Activated CD8-positive, alpha-beta T cell treated with anti-CD3 and anti-CD28 coated beads for 36 hours (primary cell): ENCODE measurements at regions of chr5 and their contacts with region 1.

Region 1: DNA sequence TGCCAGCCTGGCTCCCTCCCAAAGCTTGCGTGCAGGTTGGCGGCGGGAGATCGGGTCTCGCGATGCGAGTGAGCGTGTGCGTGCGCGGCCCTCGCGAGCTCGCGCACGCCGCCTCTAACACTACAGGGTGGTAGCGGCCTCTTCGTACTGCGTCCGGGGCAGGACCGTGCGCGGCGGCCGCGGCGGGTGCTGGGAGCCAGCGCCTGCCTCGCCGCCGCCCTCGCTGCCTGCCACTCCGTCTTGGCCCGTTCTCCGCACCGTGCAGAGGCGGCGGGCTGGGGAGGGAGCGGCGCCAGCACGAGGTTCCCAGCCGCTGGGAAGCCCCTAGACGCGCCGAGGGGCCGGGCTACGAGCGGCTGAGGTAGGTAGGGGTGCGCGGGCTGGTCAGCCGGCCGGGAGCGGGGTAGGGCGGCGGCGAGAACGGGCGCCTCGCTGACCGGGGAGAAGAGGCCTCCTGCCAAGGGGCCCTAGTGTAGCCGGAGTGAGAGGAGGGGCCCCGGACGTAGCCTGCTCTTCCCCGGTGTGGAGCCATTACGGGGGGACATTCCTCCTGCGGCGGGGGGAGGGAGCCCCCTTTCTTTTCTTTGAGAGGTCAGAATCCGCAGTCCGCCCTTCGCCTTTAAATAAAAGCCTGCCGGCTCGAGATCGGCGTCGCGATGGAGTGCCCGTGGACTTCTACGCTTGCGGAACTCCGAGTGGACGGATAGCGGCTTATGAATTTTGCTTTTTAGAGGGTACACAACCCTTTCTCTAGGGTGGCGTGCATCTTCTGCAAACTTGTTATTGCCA is at the start of gene C5orf24:
- DNase-seq: peak; percentile 94
- ATAC-seq: peak; percentile 95
- H3K4me3 Mint-ChIP-seq: peak within 1 kb of the TSS; percentile 91
- H3K27ac Mint-ChIP-seq: peak within 1 kb of the TSS; percentile 98
- H3K4me1 Mint-ChIP-seq: peaks cover 33% of the 10 kb centered on the region
- H3K27me3 Mint-ChIP-seq: no peaks in the 10 kb centered on the region
- CTCF ChIP-seq: no peak
- total RNA-seq, gene C5orf24: 24.4 to 25.3 TPM

Region 2: GRCh38 chr5:134833340-134834032 is 12.6 kb before region 1 on chr5:
- CTCF ChIA-PET with region 1: interaction called, 4 read pairs
- POLR2A ChIA-PET with region 1: interaction called, 13 read pairs
- intact Hi-C with region 1: no loop called
- DNase-seq: no peak
- ATAC-seq: no peak
- H3K4me3 Mint-ChIP-seq: no peak overlapping the region
- H3K27ac Mint-ChIP-seq: no peak overlapping the region
- H3K4me1 Mint-ChIP-seq: no peaks in the 10 kb centered on the region
- H3K27me3 Mint-ChIP-seq: no peaks in the 10 kb centered on the region
- CTCF ChIP-seq: no peak

Region 3: DNA sequence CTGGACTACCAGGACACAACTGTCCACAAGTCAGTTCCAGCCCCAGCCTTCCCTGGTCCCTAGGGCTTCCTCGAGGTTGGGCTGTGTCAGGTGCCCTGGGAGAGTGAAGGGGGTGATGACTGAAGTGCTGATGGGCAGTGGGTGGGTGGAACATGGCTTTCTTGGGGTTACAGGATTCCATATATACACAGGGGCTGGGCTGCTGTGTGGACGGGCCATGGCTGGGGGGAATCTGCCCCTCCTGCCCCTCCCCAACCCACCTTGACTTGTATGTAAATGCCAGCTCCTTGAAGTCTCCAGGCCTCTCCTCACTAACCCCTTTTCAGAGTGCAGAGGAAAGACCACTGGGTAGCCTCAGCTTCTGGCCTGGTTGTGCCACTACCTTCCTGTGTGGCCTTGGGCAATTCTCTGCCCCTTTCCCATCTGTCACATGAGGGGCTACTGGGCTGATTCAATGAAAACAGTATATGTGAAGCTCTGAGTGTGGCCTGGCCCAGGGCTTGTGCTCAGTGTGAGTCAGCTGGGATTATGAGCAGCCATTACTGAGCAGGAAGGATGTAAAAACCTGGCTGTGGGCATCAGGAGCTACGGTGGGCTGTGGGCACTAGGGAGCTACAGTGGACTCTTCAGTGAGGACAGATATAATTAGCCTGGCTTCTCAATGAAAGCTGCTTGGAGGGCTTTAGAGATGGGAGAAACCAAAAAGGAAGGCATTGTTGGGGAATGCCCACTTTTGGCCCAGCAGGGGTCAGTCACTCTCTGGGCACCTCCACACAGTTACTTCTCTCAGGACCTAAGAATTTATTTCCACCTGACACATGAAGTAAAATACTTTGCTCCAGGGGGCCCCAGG is 164.7 kb after region 1 on chr5:
- CTCF ChIA-PET with region 1: no interaction called
- POLR2A ChIA-PET with region 1: no interaction called
- intact Hi-C with region 1: no loop called
- DNase-seq: no peak
- ATAC-seq: no peak
- H3K4me3 Mint-ChIP-seq: no peak overlapping the region
- H3K27ac Mint-ChIP-seq: no peak overlapping the region
- H3K4me1 Mint-ChIP-seq: no peaks in the 10 kb centered on the region
- H3K27me3 Mint-ChIP-seq: no peaks in the 10 kb centered on the region
- CTCF ChIP-seq: no peak